CD14-positive monocyte (primary cell): ENCODE measurements at regions of chr7 and their contacts with region 1.

Region 1: GRCh38 chr7:103573479-103574058 is 127.6 kb upstream of the SLC26A5 start:
- DNase-seq: no peak
- H3K4me3 ChIP-seq: no peak overlapping the region
- H3K4me3 Mint-ChIP-seq: no peak overlapping the region
- H3K27ac ChIP-seq: no peak overlapping the region
- H3K27ac Mint-ChIP-seq: no peak overlapping the region
- H3K4me1 ChIP-seq: no peaks in the 10 kb centered on the region
- H3K4me1 Mint-ChIP-seq: no peaks in the 10 kb centered on the region
- H3K27me3 ChIP-seq: peaks cover 2% of the 10 kb centered on the region in 2 donors
- H3K27me3 Mint-ChIP-seq: peaks cover 3 to 5% (median 3%) of the 10 kb centered on the region in 3 donors
- CTCF ChIP-seq: peak; percentile 72

Region 2: GRCh38 chr7:104914421-104914820 is 1340.9 kb after region 1 on chr7:
- intact Hi-C with region 1: loop called (anchors 10 kb)
- DNase-seq: no peak
- H3K4me3 ChIP-seq: no peak overlapping the region
- H3K4me3 Mint-ChIP-seq: no peak overlapping the region
- H3K27ac ChIP-seq: no peak overlapping the region
- H3K27ac Mint-ChIP-seq: no peak overlapping the region
- H3K4me1 ChIP-seq: no peaks in the 10 kb centered on the region
- H3K4me1 Mint-ChIP-seq: no peaks in the 10 kb centered on the region
- H3K27me3 ChIP-seq: no peaks in the 10 kb centered on the region
- H3K27me3 Mint-ChIP-seq: peaks cover 1 to 6% (median 3%) of the 10 kb centered on the region in 3 donors
- CTCF ChIP-seq: no peak